Activated CD4-positive, alpha-beta memory T cell treated with anti-CD3 and anti-CD28 coated beads for 36 hours (primary cell): ENCODE measurements at regions of chr3 and their contacts with region 1.

Region 1: DNA sequence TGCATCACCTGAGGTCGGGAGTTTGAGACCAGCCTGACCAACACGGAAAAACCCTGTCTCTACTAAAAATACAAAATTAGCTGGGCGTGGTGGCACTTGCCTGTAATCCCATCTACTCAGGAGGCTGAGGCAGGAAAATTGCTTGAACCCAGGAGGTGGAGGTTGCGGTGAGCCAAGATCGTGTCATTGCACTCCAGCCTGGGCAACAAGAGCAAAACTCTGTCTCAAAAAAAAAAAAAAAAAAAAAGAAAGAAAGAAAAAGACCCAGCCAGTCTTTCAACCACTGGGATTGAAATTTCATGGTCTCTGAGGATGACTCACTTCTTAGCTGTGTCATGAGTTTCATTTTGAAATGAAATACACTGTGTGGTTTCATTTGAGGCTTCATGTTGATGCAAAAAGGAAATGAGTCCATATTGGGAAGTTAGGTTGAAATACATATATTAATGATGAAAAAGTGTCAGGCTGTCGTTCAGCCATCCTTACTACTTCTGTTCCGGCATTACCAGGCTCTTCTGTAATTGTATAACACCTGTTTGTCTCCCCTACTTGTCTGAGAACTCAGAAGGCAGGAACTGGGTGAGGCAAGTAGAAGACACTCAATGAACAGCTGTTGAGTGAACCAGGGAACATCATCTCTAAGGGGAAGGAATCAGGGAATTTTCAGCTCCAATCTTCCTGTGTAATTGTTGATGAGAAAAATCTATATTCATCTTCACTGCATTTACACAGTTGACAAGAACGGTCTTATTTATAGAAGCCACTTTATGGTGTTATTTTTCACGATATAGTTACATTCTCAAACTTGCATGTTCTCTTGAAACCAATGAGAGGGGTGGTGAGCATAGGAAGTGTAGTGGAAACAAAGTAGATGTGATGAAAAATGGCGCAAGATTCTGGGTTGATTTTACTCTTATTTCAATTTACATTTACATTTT is 87.4 kb downstream of the NFKBIZ start:
- DNase-seq: peak; percentile 65
- H3K4me3 Mint-ChIP-seq: peak overlapping the region; percentile 36
- H3K27ac Mint-ChIP-seq: peak overlapping the region; percentile 50
- H3K4me1 Mint-ChIP-seq: peaks cover 25% of the 10 kb centered on the region
- H3K27me3 Mint-ChIP-seq: peaks cover 15% of the 10 kb centered on the region

Region 2: GRCh38 chr3:101724329-101725193 is 212.1 kb before region 1 on chr3 and contains the start of gene CEP97:
- CTCF ChIA-PET with region 1: no interaction called
- POLR2A ChIA-PET with region 1: no interaction called
- intact Hi-C with region 1: loop called (anchors 5 kb)
- DNase-seq: peak; percentile 92
- H3K4me3 Mint-ChIP-seq: peak within 1 kb of the TSS; percentile 99
- H3K27ac Mint-ChIP-seq: peak within 1 kb of the TSS; percentile 99
- H3K4me1 Mint-ChIP-seq: peaks cover 46% of the 10 kb centered on the region
- H3K27me3 Mint-ChIP-seq: no peaks in the 10 kb centered on the region
- total RNA-seq, gene CEP97: 16.6 to 17.9 TPM

Region 3: GRCh38 chr3:101849051-101849720 is 87.5 kb before region 1 on chr3 and contains the start of gene NFKBIZ:
- CTCF ChIA-PET with region 1: no interaction called
- POLR2A ChIA-PET with region 1: interaction called, 16 read pairs
- intact Hi-C with region 1: loop called (anchors 1 kb)
- DNase-seq: peak; percentile 97
- H3K4me3 Mint-ChIP-seq: peak within 1 kb of the TSS; percentile 92
- H3K27ac Mint-ChIP-seq: peak within 1 kb of the TSS; percentile 99
- H3K4me1 Mint-ChIP-seq: peaks cover 45% of the 10 kb centered on the region
- H3K27me3 Mint-ChIP-seq: no peaks in the 10 kb centered on the region
- total RNA-seq, gene NFKBIZ: 65.9 to 74.9 TPM

Region 4: GRCh38 chr3:101950510-101950909 is 13.8 kb after region 1 on chr3:
- CTCF ChIA-PET with region 1: no interaction called
- POLR2A ChIA-PET with region 1: no interaction called
- intact Hi-C with region 1: loop called (anchors 1 kb)
- DNase-seq: peak; percentile 33
- H3K4me3 Mint-ChIP-seq: no peak overlapping the region
- H3K27ac Mint-ChIP-seq: peak overlapping the region; percentile 28
- H3K4me1 Mint-ChIP-seq: peaks cover 19% of the 10 kb centered on the region
- H3K27me3 Mint-ChIP-seq: no peaks in the 10 kb centered on the region

Region 5: GRCh38 chr3:101995371-101996046 is 58.8 kb after region 1 on chr3:
- CTCF ChIA-PET with region 1: no interaction called
- POLR2A ChIA-PET with region 1: no interaction called
- intact Hi-C with region 1: no loop called
- DNase-seq: no peak
- H3K4me3 Mint-ChIP-seq: no peak overlapping the region
- H3K27ac Mint-ChIP-seq: peak overlapping the region; percentile 8
- H3K4me1 Mint-ChIP-seq: peaks cover 25% of the 10 kb centered on the region
- H3K27me3 Mint-ChIP-seq: peaks cover 10% of the 10 kb centered on the region

Region 6: GRCh38 chr3:102057781-102058421 is 121.2 kb after region 1 on chr3:
- CTCF ChIA-PET with region 1: no interaction called
- POLR2A ChIA-PET with region 1: no interaction called
- intact Hi-C with region 1: loop called (anchors 5 kb)
- DNase-seq: no peak
- H3K4me3 Mint-ChIP-seq: no peak overlapping the region
- H3K27ac Mint-ChIP-seq: no peak overlapping the region
- H3K4me1 Mint-ChIP-seq: peaks cover 40% of the 10 kb centered on the region
- H3K27me3 Mint-ChIP-seq: peaks cover 1% of the 10 kb centered on the region

Region 7: GRCh38 chr3:102229062-102229655 is 292.5 kb after region 1 on chr3:
- CTCF ChIA-PET with region 1: interaction called, 8 read pairs
- POLR2A ChIA-PET with region 1: no interaction called
- intact Hi-C with region 1: loop called (anchors 10 kb)
- DNase-seq: peak; percentile 86
- H3K4me3 Mint-ChIP-seq: no peak overlapping the region
- H3K27ac Mint-ChIP-seq: no peak overlapping the region
- H3K4me1 Mint-ChIP-seq: peaks cover 15% of the 10 kb centered on the region
- H3K27me3 Mint-ChIP-seq: peaks cover 5% of the 10 kb centered on the region